ENCODE measurements at regions of chr7 and their contacts with region 1.

Region 1: DNA sequence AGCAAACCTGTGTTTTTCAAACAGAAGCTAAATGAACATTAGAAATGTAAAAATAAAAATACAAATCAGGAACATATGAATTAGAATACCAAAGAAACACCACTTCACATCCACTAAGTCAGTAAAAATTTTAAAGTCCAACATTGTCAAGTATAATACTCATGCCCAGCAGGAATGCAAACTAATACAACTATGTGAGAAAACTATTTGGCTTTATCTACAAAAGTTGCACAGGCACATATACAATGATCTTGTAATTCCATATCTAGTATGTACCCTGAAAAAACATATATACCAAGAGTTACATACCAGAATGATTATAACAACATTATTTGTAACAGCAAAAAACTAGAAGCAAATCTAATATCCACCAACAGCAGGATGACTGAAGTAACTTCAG is 91.1 kb downstream of the RNF32 start:
- DNase-seq: no peak
- H3K4me3 Mint-ChIP-seq: no peak overlapping the region
- H3K27ac Mint-ChIP-seq: no peak overlapping the region
- H3K4me1 Mint-ChIP-seq: no peaks in the 10 kb centered on the region
- H3K27me3 Mint-ChIP-seq: no peaks in the 10 kb centered on the region
- CTCF ChIP-seq: no peak

Region 2: GRCh38 chr7:155796381-155797261 is 935.0 kb before region 1 on chr7:
- CTCF ChIA-PET with region 1: interaction called, 10 read pairs
- POLR2A ChIA-PET with region 1: no interaction called
- intact Hi-C with region 1: no loop called
- DNase-seq: peak; percentile 42
- H3K4me3 Mint-ChIP-seq: no peak overlapping the region
- H3K27ac Mint-ChIP-seq: no peak overlapping the region
- H3K4me1 Mint-ChIP-seq: no peaks in the 10 kb centered on the region
- H3K27me3 Mint-ChIP-seq: no peaks in the 10 kb centered on the region
- CTCF ChIP-seq: peak; percentile 98

Measured in MCF 10A (cell line).